Gastrocnemius medialis (tissue), 4 donors: ENCODE measurements at regions of chr14 and their contacts with region 1.

Region 1: DNA sequence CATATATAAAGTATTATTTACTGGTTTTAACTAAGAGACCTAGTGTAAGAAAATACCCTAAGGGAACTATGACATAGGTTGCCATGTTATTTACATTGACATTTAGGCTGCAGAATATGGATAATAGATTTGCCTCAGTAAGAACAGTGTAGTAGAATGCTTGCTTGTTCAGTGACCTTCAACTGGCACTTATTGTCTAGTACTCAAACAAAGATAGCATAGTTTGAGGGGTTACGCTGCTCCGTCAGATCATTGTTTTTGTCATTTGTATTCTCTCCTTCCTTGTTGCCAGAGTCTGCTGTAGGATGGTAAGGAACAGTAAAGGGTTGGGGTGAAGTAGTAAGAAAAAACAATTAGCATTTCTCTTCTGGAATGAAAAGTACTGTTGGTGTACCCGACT is 33.2 kb downstream of the TOGARAM1 start:
- DNase-seq: no peak
- ATAC-seq: no peak
- H3K4me3 ChIP-seq: no peak overlapping the region
- H3K27ac ChIP-seq: no peak overlapping the region
- H3K4me1 ChIP-seq: no peaks in the 10 kb centered on the region
- H3K27me3 ChIP-seq: no peaks in the 10 kb centered on the region
- CTCF ChIP-seq: no peak
- POLR2A ChIP-seq: no peak

Region 2: DNA sequence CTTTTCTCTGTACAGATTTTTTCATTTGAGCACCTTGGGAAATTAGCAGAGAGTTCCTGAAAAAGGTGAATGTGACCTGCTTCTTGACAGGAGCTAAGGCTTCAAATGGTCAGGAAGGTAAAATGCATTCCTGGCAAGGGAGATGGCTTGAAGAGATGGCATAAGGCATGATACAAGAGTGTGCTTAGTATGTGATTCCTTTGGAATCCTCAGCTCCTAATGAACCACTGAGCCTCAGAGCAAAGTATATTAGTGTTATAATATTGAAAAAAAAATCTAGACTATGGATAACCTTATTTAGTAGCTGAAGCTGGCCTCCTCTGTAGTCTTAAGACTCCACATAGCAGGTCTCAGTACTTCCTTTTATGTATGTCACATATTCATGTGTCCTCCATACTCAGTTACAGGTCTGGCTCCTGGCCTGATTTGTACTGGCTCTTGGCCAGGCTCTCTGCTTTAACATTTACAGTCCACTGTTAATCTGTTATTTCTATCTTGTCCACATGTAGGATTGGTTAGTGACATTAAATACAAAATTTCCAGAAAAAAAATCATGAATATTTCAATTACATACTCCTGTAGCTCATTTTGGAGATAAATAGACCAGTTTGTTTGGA is 15.3 kb before region 1 on chr14:
- in situ Hi-C with region 1: no loop called
- intact Hi-C with region 1: loop called (anchors 1 kb)
- DNase-seq: peak in 1 of 2 donors; percentile 45
- ATAC-seq: peak; percentile 75 to 81
- H3K4me3 ChIP-seq: no peak overlapping the region
- H3K27ac ChIP-seq: peak overlapping the region in 3 of 4 donors; percentile 10 to 61 (median 20)
- H3K4me1 ChIP-seq: peaks cover 19 to 25% of the 10 kb centered on the region in 2 donors
- H3K27me3 ChIP-seq: no peaks in the 10 kb centered on the region
- CTCF ChIP-seq: no peak
- POLR2A ChIP-seq: no peak